PC-9 (cell line): ENCODE measurements at regions of chr15 and their contacts with region 1.

Region 1: DNA sequence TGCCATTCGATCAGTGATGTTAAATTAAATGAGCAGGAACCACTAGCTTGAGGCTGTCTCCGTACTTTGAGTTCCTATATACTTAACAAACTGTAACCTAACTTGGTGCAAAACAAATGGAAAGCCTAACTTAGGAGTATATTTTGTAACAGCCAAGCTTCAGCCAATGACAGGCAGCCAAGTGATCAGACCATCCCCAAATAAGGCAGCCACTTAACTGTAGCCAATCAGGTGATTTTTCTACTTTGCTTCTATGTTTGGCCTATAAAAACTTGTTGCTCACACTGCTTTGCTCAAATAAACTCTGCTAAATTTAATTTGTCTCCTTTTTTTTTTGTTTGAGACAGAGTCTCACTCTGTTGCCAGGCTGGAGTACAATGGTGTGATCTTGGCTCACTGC is 19.3 kb upstream of the ZNF770 start:
- DNase-seq: no peak
- H3K4me3 ChIP-seq: no peak overlapping the region
- H3K27ac ChIP-seq: no peak overlapping the region
- H3K4me1 ChIP-seq: no peaks in the 10 kb centered on the region
- H3K27me3 ChIP-seq: no peaks in the 10 kb centered on the region
- CTCF ChIP-seq: no peak

Region 2: GRCh38 chr15:34358367-34358766 is 649.0 kb before region 1 on chr15:
- CTCF ChIA-PET with region 1: no interaction called
- POLR2A ChIA-PET with region 1: no interaction called
- intact Hi-C with region 1: no loop called
- DNase-seq: no peak
- H3K4me3 ChIP-seq: no peak overlapping the region
- H3K27ac ChIP-seq: no peak overlapping the region
- H3K4me1 ChIP-seq: peaks cover 39% of the 10 kb centered on the region
- H3K27me3 ChIP-seq: no peaks in the 10 kb centered on the region
- CTCF ChIP-seq: peak; percentile 48

Region 3: GRCh38 chr15:35320158-35320780 is 312.9 kb after region 1 on chr15:
- CTCF ChIA-PET with region 1: no interaction called
- POLR2A ChIA-PET with region 1: interaction called, 10 read pairs
- intact Hi-C with region 1: no loop called
- DNase-seq: no peak
- H3K4me3 ChIP-seq: no peak overlapping the region
- H3K27ac ChIP-seq: no peak overlapping the region
- H3K4me1 ChIP-seq: no peaks in the 10 kb centered on the region
- H3K27me3 ChIP-seq: no peaks in the 10 kb centered on the region
- CTCF ChIP-seq: no peak